Calu3 (cell line): ENCODE measurements at regions of chr5 and their contacts with region 1.

Region 1: DNA sequence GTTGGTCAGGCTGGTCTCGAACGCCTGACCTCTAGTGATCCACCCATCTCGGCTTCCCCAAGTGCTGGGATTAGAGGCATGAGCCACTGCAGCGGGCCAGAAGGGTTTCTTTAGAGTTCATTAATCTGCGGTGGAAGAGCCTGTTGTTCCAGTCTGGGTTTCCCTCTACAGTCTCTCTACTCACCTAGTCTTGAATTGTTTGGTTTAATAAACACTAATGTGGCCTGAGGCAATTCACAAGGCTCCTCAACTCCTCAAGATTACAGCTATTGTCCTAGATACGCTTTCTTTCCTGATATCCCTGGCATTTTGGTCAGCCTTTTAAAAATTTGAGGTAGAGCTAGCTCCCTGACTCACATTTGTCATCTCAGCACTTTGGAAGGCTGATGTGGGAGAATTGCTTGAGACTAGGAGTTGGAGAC is 4.5 kb upstream of the SAR1B start:
- DNase-seq: peak; percentile 73
- H3K4me3 Mint-ChIP-seq: no peak overlapping the region
- H3K27ac Mint-ChIP-seq: peak overlapping the region; percentile 59
- H3K4me1 Mint-ChIP-seq: peaks cover 24% of the 10 kb centered on the region
- H3K27me3 Mint-ChIP-seq: no peaks in the 10 kb centered on the region
- CTCF ChIP-seq: no peak

Region 2: DNA sequence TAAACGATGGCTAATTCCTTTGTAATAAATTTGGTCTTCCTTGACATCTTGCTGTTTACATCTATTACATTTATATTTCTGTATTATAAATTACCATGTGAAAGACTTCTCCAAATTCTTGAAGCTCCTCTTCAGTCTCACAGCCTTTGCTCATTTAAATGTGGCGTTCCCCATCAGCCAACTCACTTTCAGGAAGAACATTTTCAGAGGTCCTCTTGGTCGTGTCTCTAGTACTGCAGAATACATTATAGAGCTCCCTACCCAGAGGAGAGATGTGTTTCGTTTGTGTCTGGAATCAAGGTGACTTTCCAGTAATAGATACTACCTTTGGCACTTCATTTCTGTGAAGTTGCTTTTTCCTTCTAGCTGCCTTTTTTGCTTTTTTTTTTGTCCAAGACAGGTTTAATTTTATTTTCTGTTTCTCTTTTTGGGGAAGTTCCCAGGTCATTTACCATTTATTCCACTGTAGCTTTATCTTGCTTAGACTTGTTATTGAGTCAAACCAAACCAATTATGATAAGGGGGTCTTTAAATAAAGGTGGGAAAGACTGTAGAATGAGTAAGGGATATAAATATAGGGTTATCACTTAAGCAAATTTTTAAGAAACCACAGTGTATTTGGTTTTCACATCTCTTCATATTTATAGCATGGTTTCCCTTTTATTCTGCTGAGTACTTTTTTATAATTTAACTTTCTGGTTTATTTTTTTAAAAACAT is 253.0 kb before region 1 on chr5:
- CTCF ChIA-PET with region 1: no interaction called
- intact Hi-C with region 1: no loop called
- DNase-seq: no peak
- H3K4me3 Mint-ChIP-seq: no peak overlapping the region
- H3K27ac Mint-ChIP-seq: no peak overlapping the region
- H3K4me1 Mint-ChIP-seq: no peaks in the 10 kb centered on the region
- H3K27me3 Mint-ChIP-seq: no peaks in the 10 kb centered on the region
- CTCF ChIP-seq: no peak

Region 3: DNA sequence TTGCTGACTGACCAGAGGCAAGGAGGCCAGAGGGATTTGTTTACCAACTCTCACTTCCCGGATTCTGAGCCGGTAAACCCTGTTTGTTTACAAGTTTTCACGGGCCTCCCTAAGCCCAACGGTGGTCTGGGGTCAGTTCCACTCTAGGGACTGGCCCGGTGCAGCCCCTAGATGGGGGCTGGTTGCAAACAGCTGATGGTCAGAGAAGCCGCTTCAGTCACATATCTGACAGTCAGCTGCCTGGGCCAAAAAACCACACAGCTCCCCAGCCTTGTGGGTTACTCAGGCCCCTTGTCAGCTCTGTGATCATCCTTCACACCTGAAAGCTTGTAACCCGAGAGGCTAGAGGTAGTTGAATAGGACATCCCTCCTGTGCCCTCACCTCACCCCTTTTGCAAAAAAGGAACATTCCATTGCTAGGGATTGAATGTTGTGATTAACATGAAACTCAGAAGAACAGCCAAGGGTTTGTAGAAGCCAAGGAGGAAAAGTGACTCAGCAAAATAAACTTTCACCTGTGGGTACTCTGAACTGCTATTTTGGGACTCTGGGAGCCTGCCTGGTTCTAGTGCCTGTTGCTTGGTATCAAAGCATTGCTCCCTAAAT is 44.9 kb before region 1 on chr5:
- CTCF ChIA-PET with region 1: interaction called, 4 read pairs
- intact Hi-C with region 1: loop called (anchors 5 kb)
- DNase-seq: peak; percentile 23
- H3K4me3 Mint-ChIP-seq: peak overlapping the region; percentile 5
- H3K27ac Mint-ChIP-seq: peak overlapping the region; percentile 68
- H3K4me1 Mint-ChIP-seq: peaks cover 31% of the 10 kb centered on the region
- H3K27me3 Mint-ChIP-seq: no peaks in the 10 kb centered on the region
- CTCF ChIP-seq: no peak

Region 4: GRCh38 chr5:134648425-134649162 is 11.4 kb after region 1 on chr5 and contains the start of gene SEC24A:
- CTCF ChIA-PET with region 1: interaction called, 6 read pairs
- intact Hi-C with region 1: loop called (anchors 2 kb)
- DNase-seq: peak; percentile 97
- H3K4me3 Mint-ChIP-seq: peak within 1 kb of the TSS; percentile 100
- H3K27ac Mint-ChIP-seq: peak within 1 kb of the TSS; percentile 100
- H3K4me1 Mint-ChIP-seq: peaks cover 10% of the 10 kb centered on the region
- H3K27me3 Mint-ChIP-seq: no peaks in the 10 kb centered on the region
- CTCF ChIP-seq: no peak
- total RNA-seq, gene SEC24A: 35.2 and 38.4 TPM in 2 replicates